ENCODE measurements at regions of chr17 and their contacts with region 1.

Region 1: DNA sequence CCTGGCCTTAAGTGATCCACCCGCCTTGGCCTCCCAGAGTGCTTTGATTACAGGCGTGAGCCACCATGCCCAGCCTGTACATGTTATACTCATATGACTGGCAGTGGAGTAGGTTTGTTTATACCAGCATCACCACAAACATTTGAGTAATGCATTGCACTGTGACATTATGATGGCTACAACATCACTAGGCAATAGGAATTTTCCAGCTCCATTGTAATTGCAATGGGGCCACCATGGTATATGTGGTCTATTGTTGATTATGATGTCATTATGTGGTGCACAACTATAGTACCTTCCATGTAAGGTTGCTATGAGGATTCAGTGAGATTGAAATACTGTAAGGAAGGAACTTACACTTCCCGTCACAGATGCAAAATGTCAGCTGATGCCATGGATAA is 168.9 kb downstream of the COPRS start:
- DNase-seq: no peak
- H3K4me3 ChIP-seq: no peak overlapping the region
- H3K27ac ChIP-seq: no peak overlapping the region
- H3K4me1 ChIP-seq: peaks cover 0 to 45% (median 43%) of the 10 kb centered on the region in 4 donors
- H3K27me3 ChIP-seq: no peaks in the 10 kb centered on the region
- CTCF ChIP-seq: no peak
- EP300 ChIP-seq: no peak
- POLR2A ChIP-seq: no peak

Region 2: GRCh38 chr17:31373150-31374093 is 316.7 kb before region 1 on chr17:
- intact Hi-C with region 1: no loop called
- DNase-seq: no peak
- H3K4me3 ChIP-seq: no peak overlapping the region
- H3K27ac ChIP-seq: no peak overlapping the region
- H3K4me1 ChIP-seq: peaks cover 0 to 9% (median 3%) of the 10 kb centered on the region in 4 donors
- H3K27me3 ChIP-seq: no peaks in the 10 kb centered on the region
- CTCF ChIP-seq: peak in 3 of 4 experiments; percentile 20 to 26 (median 24)
- EP300 ChIP-seq: no peak
- POLR2A ChIP-seq: no peak

Region 3: DNA sequence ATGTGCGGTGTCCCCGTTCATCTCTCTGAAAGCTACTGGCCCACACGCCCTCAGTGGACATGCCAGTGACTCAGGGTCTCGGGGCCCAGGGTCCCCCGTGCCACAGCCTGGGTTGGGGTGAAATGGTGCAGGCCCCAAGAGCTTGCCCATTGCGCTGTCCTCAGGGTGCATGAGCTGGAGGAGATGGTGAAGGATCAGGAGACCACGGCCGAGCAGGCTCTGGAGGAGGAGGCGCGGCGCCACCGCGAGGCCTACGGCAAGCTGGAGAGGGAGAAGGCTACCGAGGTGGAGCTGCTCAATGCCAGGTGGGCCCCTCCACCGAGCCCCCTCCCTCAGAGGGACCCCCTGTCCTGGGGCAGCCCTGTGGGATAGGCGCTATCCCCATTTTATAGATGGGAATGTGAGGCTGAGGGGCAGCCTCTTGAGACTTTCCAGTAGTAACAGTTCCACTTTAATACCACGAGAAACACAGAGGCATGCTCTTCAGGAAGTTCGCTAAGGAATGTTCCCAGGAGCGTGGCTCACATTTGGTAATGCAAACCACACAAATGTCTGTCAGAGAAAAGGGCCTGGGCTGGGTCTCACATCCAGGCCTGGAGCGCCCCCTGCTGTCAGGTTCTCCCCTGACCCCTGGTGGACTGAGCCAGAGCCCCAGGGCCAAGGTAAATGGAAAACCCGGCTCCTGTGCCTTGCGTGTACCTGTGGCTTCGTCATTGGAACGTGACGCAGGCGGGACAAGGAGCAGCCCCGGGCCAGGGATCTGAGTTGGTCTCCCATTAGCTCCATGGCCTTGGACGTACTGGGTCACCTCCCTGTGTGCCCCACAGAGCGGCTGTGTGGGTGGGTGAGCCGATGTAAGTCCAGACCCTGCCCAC is 165.0 kb before region 1 on chr17:
- intact Hi-C with region 1: no loop called
- DNase-seq: peak; percentile 88
- H3K4me3 ChIP-seq: no peak overlapping the region
- H3K27ac ChIP-seq: no peak overlapping the region
- H3K4me1 ChIP-seq: no peaks in the 10 kb centered on the region
- H3K27me3 ChIP-seq: no peaks in the 10 kb centered on the region
- CTCF ChIP-seq: peak; percentile 45 to 87 (median 81)
- EP300 ChIP-seq: no peak
- POLR2A ChIP-seq: no peak

Region 4: GRCh38 chr17:31645351-31645750 is 44.8 kb before region 1 on chr17:
- intact Hi-C with region 1: loop called (anchors 5 kb)
- DNase-seq: no peak
- H3K4me3 ChIP-seq: no peak overlapping the region
- H3K27ac ChIP-seq: no peak overlapping the region
- H3K4me1 ChIP-seq: peaks cover 0 to 6% (median 2%) of the 10 kb centered on the region in 4 donors
- H3K27me3 ChIP-seq: no peaks in the 10 kb centered on the region
- CTCF ChIP-seq: no peak
- EP300 ChIP-seq: no peak
- POLR2A ChIP-seq: no peak

Region 5: GRCh38 chr17:31820691-31821435 is 130.7 kb after region 1 on chr17:
- intact Hi-C with region 1: no loop called
- DNase-seq: no peak
- H3K4me3 ChIP-seq: no peak overlapping the region
- H3K27ac ChIP-seq: no peak overlapping the region
- H3K4me1 ChIP-seq: peaks cover 0 to 14% (median 13%) of the 10 kb centered on the region in 4 donors
- H3K27me3 ChIP-seq: no peaks in the 10 kb centered on the region
- CTCF ChIP-seq: no peak
- EP300 ChIP-seq: no peak
- POLR2A ChIP-seq: no peak

Measured in sigmoid colon (tissue), 7 donors.